GM10248 (cell line): ENCODE measurements at regions of chr12 and their contacts with region 1.

Region 1: GRCh38 chr12:18261253-18261652 is at the start of gene PIK3C2G:
- DNase-seq: no peak
- CTCF ChIP-seq: no peak

Region 2: GRCh38 chr12:18250313-18250916 is 10.8 kb before region 1 on chr12:
- CTCF ChIA-PET with region 1: interaction called, 25 read pairs
- POLR2A ChIA-PET with region 1: no interaction called
- DNase-seq: peak; percentile 39
- CTCF ChIP-seq: peak; percentile 71

Region 3: DNA sequence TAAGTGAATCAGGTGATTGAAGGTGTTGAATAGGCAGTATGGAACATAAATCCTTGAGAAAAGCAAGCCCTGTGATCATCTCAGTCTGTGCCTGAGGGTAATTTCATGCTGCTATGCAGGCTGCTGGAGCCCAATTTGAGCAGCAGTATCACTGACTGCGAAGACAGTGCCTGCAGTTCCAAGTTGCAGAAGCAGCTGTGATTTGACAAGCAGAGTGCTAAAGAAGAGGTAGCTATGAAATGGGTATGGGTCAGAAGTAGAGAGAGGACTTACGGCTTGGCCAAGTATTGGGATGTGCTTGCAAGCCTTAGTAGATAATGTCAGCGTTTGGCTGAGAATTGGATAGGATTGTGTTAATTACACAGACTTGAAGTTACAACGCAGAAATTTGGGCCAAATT is 22.6 kb after region 1 on chr12:
- CTCF ChIA-PET with region 1: no interaction called
- POLR2A ChIA-PET with region 1: no interaction called
- DNase-seq: no peak
- CTCF ChIP-seq: no peak